ENCODE measurements at regions of chr20 and their contacts with region 1.

Region 1: DNA sequence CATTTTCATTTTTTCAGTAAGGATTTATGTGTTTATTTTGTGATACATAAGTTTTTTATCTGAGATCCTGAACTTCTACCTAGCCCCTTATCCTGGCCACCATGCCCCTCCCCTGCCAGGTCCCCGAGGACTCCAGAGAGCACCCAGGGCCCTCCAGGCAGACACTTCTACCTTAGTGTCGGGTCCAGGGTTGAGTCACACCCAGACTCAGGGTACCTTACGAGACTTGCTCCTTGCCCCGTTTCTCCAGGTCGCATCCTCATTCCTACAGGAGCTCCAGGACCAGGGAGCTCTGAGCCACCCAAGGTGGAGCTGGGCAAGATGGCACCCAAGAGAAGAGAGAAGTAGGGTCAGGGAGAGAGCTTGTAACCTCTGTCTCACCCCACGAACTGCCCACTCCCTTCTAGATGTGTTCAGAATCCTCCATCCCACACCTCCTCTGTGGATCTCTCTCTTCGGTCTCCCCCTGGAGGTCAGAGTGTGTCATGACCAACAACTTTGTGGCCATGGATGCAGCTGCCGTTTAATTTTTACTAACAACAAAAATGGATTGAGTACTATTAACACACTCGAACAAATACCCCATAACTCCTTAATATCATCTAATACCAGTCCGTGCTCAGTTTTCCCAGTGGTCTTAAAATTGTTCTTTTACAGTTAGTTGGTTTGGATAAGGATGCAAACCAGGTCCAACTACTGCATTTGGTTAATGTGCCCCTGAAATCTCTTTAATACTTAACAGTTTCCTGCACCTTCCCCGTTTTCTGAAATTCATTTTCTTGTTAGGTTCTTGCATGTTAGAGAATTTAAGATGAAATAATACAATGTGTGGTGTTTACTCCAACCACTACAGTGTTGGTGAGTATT is 130.6 kb upstream of the INSM1 start:
- DNase-seq: peak in 1 of 2 experiments; percentile 65
- H3K4me3 ChIP-seq: no peak overlapping the region
- H3K27ac ChIP-seq: no peak overlapping the region
- H3K4me1 ChIP-seq: no peaks in the 10 kb centered on the region
- H3K27me3 ChIP-seq: no peaks in the 10 kb centered on the region; a peak in 1 of 7 replicates
- CTCF ChIP-seq: peak; percentile 64 to 77 (median 77)
- EP300 ChIP-seq: no peak
- POLR2A ChIP-seq: no peak
- RAD21 ChIP-seq: peak; percentile 76 to 82

Region 2: GRCh38 chr20:20089018-20089417 is 148.3 kb before region 1 on chr20:
- CTCF ChIA-PET with region 1: interaction called, 17 read pairs
- POLR2A ChIA-PET with region 1: no interaction called
- DNase-seq: no peak
- H3K4me3 ChIP-seq: no peak overlapping the region
- H3K27ac ChIP-seq: no peak overlapping the region
- H3K4me1 ChIP-seq: no peaks in the 10 kb centered on the region
- H3K27me3 ChIP-seq: no peaks in the 10 kb centered on the region
- CTCF ChIP-seq: no peak
- EP300 ChIP-seq: no peak
- POLR2A ChIP-seq: no peak
- RAD21 ChIP-seq: no peak

Region 3: DNA sequence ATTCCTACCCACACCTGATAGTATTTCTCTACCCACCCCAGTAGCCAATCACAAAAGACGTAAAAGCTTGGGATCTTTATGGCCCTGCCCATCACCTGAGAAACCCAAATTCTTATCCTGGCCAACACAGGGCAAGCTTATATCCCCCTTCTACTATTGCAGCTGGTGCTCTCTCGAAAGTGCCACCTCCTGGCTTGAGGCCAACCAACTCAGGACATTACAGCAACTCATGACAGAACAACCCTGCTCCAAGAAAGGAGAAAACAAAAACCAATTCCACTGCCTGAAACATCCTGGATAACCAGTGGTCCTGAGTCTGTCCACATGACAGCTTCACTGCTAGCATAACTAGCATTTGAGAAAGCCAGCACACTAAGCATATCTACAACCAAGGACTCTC is 87.1 kb before region 1 on chr20:
- CTCF ChIA-PET with region 1: no interaction called
- POLR2A ChIA-PET with region 1: no interaction called
- DNase-seq: no peak
- H3K4me3 ChIP-seq: no peak overlapping the region
- H3K27ac ChIP-seq: no peak overlapping the region
- H3K4me1 ChIP-seq: no peaks in the 10 kb centered on the region
- H3K27me3 ChIP-seq: no peaks in the 10 kb centered on the region
- CTCF ChIP-seq: no peak
- EP300 ChIP-seq: no peak
- POLR2A ChIP-seq: no peak
- RAD21 ChIP-seq: no peak

Region 4: GRCh38 chr20:20174089-20174836 is 63.1 kb before region 1 on chr20:
- CTCF ChIA-PET with region 1: interaction called, 10 read pairs
- POLR2A ChIA-PET with region 1: no interaction called
- DNase-seq: no peak
- H3K4me3 ChIP-seq: no peak overlapping the region
- H3K27ac ChIP-seq: no peak overlapping the region
- H3K4me1 ChIP-seq: no peaks in the 10 kb centered on the region
- H3K27me3 ChIP-seq: no peaks in the 10 kb centered on the region
- CTCF ChIP-seq: peak; percentile 25 to 38 (median 28); a peak in 3 of 4 replicates
- EP300 ChIP-seq: no peak
- POLR2A ChIP-seq: no peak
- RAD21 ChIP-seq: peak in 1 of 2 experiments; percentile 39; a peak in 2 of 4 replicates

Region 5: GRCh38 chr20:20204291-20204690 is 33.0 kb before region 1 on chr20:
- CTCF ChIA-PET with region 1: interaction called, 10 read pairs
- POLR2A ChIA-PET with region 1: no interaction called
- DNase-seq: no peak
- H3K4me3 ChIP-seq: no peak overlapping the region
- H3K27ac ChIP-seq: no peak overlapping the region
- H3K4me1 ChIP-seq: peaks cover 4 to 16% (median 6%) of the 10 kb centered on the region in 4 experiments; a peak in 6 of 7 replicates
- H3K27me3 ChIP-seq: no peaks in the 10 kb centered on the region
- CTCF ChIP-seq: no peak
- EP300 ChIP-seq: no peak
- POLR2A ChIP-seq: no peak
- RAD21 ChIP-seq: no peak

Region 6: GRCh38 chr20:20225325-20226043 is 11.8 kb before region 1 on chr20:
- CTCF ChIA-PET with region 1: interaction called, 37 read pairs
- POLR2A ChIA-PET with region 1: no interaction called
- DNase-seq: no peak
- H3K4me3 ChIP-seq: no peak overlapping the region
- H3K27ac ChIP-seq: no peak overlapping the region
- H3K4me1 ChIP-seq: peaks cover 0 to 3% (median 1%) of the 10 kb centered on the region in 4 experiments; a peak in 1 of 7 replicates
- H3K27me3 ChIP-seq: no peaks in the 10 kb centered on the region
- CTCF ChIP-seq: no peak
- EP300 ChIP-seq: no peak
- POLR2A ChIP-seq: no peak
- RAD21 ChIP-seq: no peak